AG04449 (cell line): ENCODE measurements at regions of chr6 and their contacts with region 1.

Region 1: DNA sequence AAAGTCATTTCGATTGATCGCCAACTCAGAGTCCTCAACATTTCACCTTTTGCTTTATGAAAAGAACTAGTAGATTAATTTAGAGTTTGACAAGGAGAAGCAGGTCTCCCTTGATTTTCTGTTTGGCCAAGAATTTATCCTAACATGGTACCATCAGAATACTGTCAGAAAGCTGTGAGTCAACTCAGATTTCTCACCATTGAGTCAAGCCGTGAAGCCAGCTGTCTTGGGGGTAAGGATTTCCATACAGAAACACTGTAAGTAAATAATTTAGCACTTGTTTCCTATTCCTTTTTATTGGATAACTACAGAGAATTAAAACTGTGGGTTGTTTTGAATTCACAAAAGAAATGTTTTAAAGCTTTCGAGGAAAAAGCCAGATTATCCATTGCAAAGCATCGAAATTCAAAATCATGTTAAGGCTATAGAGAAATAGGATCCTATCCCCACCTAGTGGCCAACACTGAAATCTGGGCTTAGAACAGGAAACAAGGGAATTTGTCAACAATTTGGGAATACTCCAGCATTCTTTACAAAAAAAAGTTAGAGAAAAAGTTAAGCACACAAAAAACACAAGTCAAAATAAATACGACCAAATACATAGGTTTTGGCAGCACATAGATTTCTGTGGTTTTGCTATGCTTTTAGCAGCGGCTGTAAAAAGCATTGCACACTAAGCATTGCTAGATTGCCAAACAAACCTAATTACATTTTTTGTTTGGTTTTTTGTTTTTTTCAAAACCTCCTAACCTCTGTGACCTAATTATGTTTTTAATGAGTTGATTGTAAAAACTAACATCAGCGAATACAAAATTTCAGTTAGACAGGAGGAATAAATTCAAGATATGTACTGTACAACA is 44.2 kb downstream of the COL11A2 start:
- DNase-seq: no peak
- H3K4me3 ChIP-seq: no peak overlapping the region
- CTCF ChIP-seq: peak; percentile 69

Region 2: GRCh38 chr6:33118525-33119123 is 29.4 kb before region 1 on chr6:
- CTCF ChIA-PET with region 1: interaction called, 62 read pairs
- POLR2A ChIA-PET with region 1: no interaction called
- DNase-seq: no peak
- H3K4me3 ChIP-seq: no peak overlapping the region
- CTCF ChIP-seq: peak; percentile 56

Region 3: GRCh38 chr6:33132081-33132524 is 15.9 kb before region 1 on chr6:
- CTCF ChIA-PET with region 1: interaction called, 68 read pairs
- POLR2A ChIA-PET with region 1: no interaction called
- DNase-seq: no peak
- H3K4me3 ChIP-seq: no peak overlapping the region
- CTCF ChIP-seq: no peak

Region 4: DNA sequence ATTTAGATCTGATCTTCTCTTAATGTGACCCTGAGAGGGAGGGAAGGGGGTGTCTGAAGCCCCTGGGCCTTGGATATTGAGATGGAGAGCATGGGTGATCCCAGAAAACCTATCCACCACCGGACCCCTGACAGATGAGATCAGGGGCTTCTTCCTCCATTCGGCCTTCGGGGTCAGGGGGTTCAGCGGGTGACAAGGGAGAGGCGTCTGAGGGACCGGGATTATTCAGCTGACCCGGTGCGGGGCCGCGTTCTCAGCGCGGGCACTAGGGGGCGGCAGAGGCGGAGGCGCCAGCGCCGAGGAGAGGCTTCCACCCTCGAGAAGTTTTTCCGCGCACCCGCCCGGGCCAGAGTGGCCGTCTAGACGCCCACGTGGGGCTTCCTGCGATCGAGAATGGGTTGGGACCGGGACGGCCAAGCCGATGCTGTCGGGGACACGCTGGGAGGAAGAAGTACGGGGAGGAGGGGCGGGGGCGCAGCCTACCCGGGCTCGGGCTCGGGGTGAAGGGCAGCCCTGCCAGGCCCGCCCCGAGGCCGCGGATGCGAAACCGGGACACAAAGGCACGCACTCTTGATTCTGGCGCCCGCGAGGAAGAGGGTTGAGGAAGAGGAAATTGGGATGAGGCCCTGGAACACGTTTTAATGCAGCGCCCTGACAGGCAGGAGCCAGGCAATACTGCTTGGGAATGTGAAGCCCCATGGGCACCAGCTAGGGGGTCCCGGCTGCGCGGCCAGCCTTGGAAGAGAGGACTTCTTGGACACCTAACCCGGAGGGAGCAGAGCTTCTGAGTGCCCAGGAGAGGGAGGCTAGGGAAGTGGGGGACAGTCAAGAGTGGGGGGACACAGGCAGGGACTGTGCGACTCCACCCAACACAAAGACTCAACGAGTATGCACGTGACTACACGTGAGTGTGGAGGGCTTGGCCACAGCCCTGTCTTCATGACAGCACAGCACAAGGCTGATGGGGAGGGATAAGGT is 13.6 kb after region 1 on chr6:
- CTCF ChIA-PET with region 1: interaction called, 83 read pairs
- POLR2A ChIA-PET with region 1: no interaction called
- DNase-seq: no peak
- H3K4me3 ChIP-seq: peak overlapping the region; percentile 57
- CTCF ChIP-seq: peak; percentile 94

Region 5: DNA sequence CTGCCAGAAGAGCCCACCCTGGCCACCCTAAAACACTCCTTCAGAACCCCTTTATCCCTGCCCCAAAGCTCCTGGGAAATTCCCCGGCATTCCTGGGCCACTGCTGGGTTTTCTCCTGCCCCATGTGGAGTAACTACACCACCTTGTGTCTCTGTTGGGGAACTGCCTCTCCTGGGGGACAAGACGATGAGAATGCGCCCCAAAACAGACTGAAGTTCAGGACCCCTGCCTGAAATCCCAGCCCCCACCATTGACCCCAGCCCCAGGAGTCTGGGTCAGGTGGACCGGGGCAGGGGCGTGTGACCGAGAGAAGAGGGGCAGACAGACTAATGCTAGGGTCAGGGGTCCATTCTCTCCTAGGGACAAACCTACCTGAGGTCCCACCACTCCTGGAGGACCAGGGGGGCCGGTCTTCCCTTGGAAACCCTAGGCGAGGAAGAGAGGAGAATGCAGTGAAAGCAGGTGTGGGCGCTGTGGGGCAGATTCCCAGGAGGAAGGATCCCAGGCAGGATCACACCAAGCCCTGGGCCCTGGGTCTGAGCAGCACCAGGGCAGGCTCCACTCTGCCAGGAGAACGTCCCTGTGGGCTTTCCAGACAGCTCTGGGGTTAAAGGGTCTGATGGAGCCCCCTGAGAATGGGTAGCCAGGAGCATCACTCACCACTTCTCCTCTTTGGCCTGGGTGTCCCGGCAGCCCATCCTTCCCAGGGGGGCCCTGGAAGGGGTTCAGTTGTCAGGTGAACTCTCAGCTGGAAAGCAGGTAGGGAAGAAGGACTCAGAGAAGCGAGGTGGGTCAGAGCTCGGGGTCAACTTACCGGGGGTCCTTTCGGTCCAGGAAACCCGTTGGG is 24.9 kb after region 1 on chr6:
- CTCF ChIA-PET with region 1: interaction called, 13 read pairs
- POLR2A ChIA-PET with region 1: no interaction called
- DNase-seq: no peak
- H3K4me3 ChIP-seq: no peak overlapping the region
- CTCF ChIP-seq: peak; percentile 67

Region 6: DNA sequence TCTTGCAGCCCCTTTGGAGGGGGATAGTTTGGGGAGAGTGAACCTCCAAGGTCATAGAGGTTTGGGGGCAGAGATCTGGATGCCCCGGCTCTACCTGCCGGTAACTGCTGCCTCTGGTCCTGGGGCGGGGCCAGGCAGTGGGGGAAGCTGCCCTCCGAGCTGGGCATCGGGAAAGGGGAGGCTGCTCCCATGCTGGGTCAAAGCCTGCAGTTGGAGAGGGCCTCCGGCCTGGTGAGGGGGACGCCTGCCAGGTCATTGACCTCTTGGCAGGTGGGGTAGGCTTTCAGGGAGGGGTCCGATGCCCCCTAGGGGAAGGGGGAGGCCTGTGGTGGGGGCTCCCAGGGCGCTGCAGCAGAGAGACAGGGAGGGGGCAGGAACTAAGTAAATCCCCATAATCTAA is 37.2 kb after region 1 on chr6:
- CTCF ChIA-PET with region 1: no interaction called
- POLR2A ChIA-PET with region 1: no interaction called
- DNase-seq: no peak
- H3K4me3 ChIP-seq: no peak overlapping the region
- CTCF ChIP-seq: no peak

Region 7: GRCh38 chr6:33557376-33557775 is 409.3 kb after region 1 on chr6:
- CTCF ChIA-PET with region 1: no interaction called
- POLR2A ChIA-PET with region 1: no interaction called
- DNase-seq: no peak
- H3K4me3 ChIP-seq: no peak overlapping the region
- CTCF ChIP-seq: no peak